Activated CD8-positive, alpha-beta T cell treated with anti-CD3 and anti-CD28 coated beads for 36 hours (primary cell): ENCODE measurements at regions of chr15 and their contacts with region 1.

Region 1: GRCh38 chr15:94008104-94009074 is 223.0 kb upstream of the MCTP2 start:
- DNase-seq: no peak
- ATAC-seq: no peak
- H3K4me3 Mint-ChIP-seq: no peak overlapping the region
- H3K27ac Mint-ChIP-seq: no peak overlapping the region
- H3K4me1 Mint-ChIP-seq: no peaks in the 10 kb centered on the region
- H3K27me3 Mint-ChIP-seq: no peaks in the 10 kb centered on the region
- CTCF ChIP-seq: no peak

Region 2: DNA sequence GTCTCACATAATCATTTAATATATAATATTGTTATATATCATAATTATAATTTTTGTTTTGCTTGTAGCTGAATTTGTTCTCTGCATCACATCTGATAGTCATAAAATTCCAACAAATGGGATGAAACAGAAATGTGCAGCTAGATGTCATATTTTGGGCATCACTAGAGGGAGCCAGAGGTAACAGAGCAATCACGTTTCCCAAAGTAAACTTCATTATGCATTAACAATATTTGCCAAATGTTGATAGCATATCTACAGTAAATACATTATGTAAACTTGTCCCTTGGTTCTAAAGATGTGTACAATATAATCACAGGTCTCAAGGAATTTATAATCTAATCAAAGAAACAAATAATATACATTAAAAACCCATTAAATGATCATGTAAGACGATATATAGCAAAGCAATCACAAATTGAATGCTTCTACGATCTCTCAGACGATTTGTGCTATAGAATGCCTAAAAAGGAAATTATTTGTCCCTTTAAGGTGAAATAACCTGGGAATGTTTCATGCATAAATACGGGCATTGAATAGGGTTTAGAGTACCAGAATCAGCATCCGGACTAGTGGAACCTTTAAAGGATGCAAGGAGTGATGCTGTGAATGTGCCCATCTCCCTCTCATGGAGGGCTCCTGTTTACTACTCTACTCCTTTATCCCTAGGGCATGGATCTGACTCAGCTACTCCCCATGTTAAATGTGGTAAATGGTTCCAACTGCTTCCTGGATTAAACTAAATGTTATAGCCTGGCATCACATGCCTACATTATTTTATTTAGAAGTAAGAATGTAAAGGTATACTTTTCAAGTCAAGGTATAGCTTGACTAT is 11.1 kb before region 1 on chr15:
- CTCF ChIA-PET with region 1: interaction called, 12 read pairs
- POLR2A ChIA-PET with region 1: no interaction called
- intact Hi-C with region 1: no loop called
- DNase-seq: no peak
- ATAC-seq: no peak
- H3K4me3 Mint-ChIP-seq: no peak overlapping the region
- H3K27ac Mint-ChIP-seq: no peak overlapping the region
- H3K4me1 Mint-ChIP-seq: no peaks in the 10 kb centered on the region
- H3K27me3 Mint-ChIP-seq: no peaks in the 10 kb centered on the region
- CTCF ChIP-seq: peak; percentile 81

Region 3: DNA sequence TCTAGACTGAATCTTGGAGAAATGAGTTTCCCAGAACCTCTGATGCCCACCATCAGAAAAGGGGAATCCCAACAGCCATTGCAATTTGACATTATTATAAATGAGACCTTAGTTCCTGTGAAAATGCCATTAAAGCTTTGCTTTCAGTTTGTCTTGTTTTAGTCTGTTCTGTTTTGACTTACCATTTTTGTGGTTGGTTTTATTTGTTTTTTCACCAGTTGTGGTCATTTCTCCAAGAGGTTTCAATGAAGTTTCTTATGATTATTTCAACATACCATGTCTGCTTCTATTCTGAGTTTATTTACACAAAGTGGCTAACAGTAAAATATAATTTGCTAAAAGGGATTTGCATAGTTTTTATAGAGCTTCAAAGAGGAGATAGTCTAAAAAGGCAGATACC is 47.9 kb after region 1 on chr15:
- CTCF ChIA-PET with region 1: no interaction called
- POLR2A ChIA-PET with region 1: no interaction called
- intact Hi-C with region 1: no loop called
- DNase-seq: no peak
- ATAC-seq: no peak
- H3K4me3 Mint-ChIP-seq: no peak overlapping the region
- H3K27ac Mint-ChIP-seq: no peak overlapping the region
- H3K4me1 Mint-ChIP-seq: no peaks in the 10 kb centered on the region
- H3K27me3 Mint-ChIP-seq: peaks cover 10% of the 10 kb centered on the region
- CTCF ChIP-seq: no peak

Region 4: DNA sequence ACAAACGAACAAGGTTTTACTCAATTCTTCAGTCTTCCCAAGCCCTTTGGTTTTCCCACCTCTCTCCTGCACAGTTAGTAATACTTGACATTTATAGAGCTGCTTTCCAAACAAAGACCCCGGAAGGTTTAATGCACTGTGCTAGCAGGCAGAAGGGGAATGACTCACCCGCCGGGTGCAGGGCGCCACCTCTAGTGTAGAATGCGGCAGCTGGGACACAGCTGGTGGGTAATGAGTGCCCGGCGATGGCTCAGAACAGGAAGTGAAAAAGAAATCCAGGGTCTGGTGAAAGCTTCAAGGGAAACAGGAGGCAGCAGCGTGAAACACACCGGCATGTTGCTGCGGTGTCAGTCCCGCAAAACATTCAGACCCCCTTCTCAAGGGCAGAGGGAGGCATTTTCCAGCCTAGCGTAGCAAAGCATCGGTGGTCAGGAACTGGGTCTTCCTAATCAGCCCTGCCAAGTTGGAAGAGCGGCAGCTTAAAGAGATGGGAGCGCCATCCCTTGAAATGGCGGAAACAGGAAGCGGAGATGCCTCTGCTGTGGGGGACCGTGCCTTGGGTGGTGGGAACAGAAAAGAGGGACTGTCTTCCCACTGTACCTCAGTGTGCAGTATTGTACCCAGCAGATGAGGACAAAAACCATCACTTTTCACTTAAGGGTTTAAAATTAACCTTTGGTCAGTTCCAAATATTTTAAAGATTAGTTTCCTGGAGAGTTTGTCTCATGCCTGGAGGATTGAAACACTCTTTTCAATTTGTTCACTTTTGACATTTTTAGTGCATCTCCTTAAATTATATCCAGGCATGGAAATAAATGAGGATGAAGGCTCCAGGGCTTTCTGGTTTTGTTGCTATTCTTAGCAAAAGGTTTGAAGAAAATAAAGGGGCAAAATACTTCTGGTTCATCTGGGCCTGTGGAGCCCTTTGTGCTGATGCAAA is 62.2 kb after region 1 on chr15:
- CTCF ChIA-PET with region 1: no interaction called
- POLR2A ChIA-PET with region 1: no interaction called
- intact Hi-C with region 1: no loop called
- DNase-seq: peak; percentile 9
- ATAC-seq: no peak
- H3K4me3 Mint-ChIP-seq: no peak overlapping the region
- H3K27ac Mint-ChIP-seq: no peak overlapping the region
- H3K4me1 Mint-ChIP-seq: no peaks in the 10 kb centered on the region
- H3K27me3 Mint-ChIP-seq: peaks cover 8% of the 10 kb centered on the region
- CTCF ChIP-seq: no peak

Region 5: GRCh38 chr15:94119923-94120775 is 111.8 kb after region 1 on chr15:
- CTCF ChIA-PET with region 1: interaction called, 11 read pairs
- POLR2A ChIA-PET with region 1: no interaction called
- intact Hi-C with region 1: no loop called
- DNase-seq: peak; percentile 70
- ATAC-seq: peak; percentile 100
- H3K4me3 Mint-ChIP-seq: no peak overlapping the region
- H3K27ac Mint-ChIP-seq: no peak overlapping the region
- H3K4me1 Mint-ChIP-seq: no peaks in the 10 kb centered on the region
- H3K27me3 Mint-ChIP-seq: no peaks in the 10 kb centered on the region
- CTCF ChIP-seq: peak; percentile 85

Region 6: DNA sequence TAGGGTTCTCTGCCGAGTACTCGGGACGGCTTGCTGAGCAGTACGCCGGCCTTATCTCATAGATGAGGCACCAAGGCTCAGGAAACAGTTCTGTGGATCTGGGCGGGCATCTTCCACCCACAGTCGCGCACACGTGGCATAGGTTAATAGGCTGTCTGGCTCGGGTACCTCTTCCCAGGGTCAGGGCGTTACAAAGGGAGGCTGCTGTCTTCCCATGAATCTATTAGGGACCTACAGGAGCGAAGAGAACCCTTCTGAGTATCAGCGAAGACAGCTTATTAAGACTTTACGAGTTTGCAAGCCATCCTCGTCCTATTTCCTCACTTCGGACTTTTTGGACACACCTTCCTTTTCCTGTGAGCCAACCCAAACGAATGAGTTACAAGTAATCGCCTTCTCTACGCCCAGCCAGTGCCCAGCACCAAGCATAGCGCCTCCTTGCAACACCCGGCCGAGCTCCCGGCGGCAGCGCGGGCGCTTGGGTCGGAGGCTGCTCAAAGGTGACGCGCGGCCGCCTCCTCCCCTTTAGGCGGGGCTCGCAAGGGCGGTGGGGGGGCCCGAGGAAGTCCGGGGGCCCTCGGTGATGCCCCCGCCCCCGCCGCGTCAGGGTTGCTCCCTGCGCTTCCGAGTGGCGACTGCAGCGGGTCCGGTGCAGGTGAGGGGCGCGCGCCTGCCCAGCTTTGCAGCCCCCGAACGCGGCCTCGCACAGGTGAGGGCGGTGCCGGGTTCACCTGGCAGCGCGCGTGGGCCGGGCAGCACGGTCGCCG is 222.8 kb after region 1 on chr15 and contains the start of gene MCTP2:
- CTCF ChIA-PET with region 1: no interaction called
- POLR2A ChIA-PET with region 1: no interaction called
- intact Hi-C with region 1: no loop called
- DNase-seq: peak; percentile 92
- ATAC-seq: peak; percentile 86
- H3K4me3 Mint-ChIP-seq: peak within 1 kb of the TSS; percentile 91
- H3K27ac Mint-ChIP-seq: peak within 1 kb of the TSS; percentile 96
- H3K4me1 Mint-ChIP-seq: peaks cover 67% of the 10 kb centered on the region
- H3K27me3 Mint-ChIP-seq: no peaks in the 10 kb centered on the region
- CTCF ChIP-seq: no peak
- total RNA-seq, gene MCTP2: 16.2 to 18.3 TPM